T-cell (primary cell): ENCODE measurements at regions of chrX and their contacts with region 1.

Region 1: DNA sequence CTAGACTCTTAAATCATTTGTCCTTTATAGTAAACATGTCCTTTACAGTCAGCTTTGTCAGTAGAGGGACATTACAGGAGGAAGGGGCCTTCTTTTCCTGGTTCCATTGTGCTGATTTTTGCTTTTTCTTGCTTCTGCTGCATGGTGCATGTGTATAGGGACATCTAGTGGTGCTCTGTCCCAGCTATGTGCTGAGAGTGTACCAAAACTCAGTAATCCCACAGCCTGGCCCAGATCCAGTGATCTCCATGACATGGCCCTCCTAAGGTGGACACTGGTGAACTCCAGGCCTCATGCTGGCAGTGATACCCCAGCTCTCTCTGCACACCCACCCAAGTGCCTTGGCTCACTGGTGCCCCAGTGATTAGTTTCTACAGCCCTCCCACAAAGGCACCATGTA is 45.2 kb downstream of the MAGEB17 start:
- DNase-seq: peak in 1 of 35 experiments; percentile 0
- ATAC-seq: no peak
- H3K4me3 ChIP-seq: no peak overlapping the region
- H3K4me3 Mint-ChIP-seq: no peak overlapping the region
- H3K27ac ChIP-seq: no peak overlapping the region
- H3K27ac Mint-ChIP-seq: no peak overlapping the region
- H3K4me1 ChIP-seq: no peaks in the 10 kb centered on the region
- H3K4me1 Mint-ChIP-seq: no peaks in the 10 kb centered on the region
- H3K27me3 ChIP-seq: no peaks in the 10 kb centered on the region
- H3K27me3 Mint-ChIP-seq: peaks cover 1 to 4% of the 10 kb centered on the region in 2 donors

Region 2: GRCh38 chrX:16186380-16187007 is 25.9 kb before region 1 on chrX:
- CTCF ChIA-PET with region 1: no interaction called
- POLR2A ChIA-PET with region 1: interaction called in 1 of 2 experiments, 11 read pairs
- DNase-seq: no peak
- ATAC-seq: no peak
- H3K4me3 ChIP-seq: no peak overlapping the region
- H3K4me3 Mint-ChIP-seq: no peak overlapping the region
- H3K27ac ChIP-seq: no peak overlapping the region
- H3K27ac Mint-ChIP-seq: no peak overlapping the region
- H3K4me1 ChIP-seq: no peaks in the 10 kb centered on the region
- H3K4me1 Mint-ChIP-seq: no peaks in the 10 kb centered on the region
- H3K27me3 ChIP-seq: no peaks in the 10 kb centered on the region
- H3K27me3 Mint-ChIP-seq: peaks cover 4 to 23% of the 10 kb centered on the region in 2 donors

Region 3: GRCh38 chrX:16223385-16223784 is 10.9 kb after region 1 on chrX:
- CTCF ChIA-PET with region 1: no interaction called
- POLR2A ChIA-PET with region 1: no interaction called
- DNase-seq: no peak
- ATAC-seq: no peak
- H3K4me3 ChIP-seq: no peak overlapping the region
- H3K4me3 Mint-ChIP-seq: no peak overlapping the region
- H3K27ac ChIP-seq: no peak overlapping the region
- H3K27ac Mint-ChIP-seq: no peak overlapping the region
- H3K4me1 ChIP-seq: no peaks in the 10 kb centered on the region
- H3K4me1 Mint-ChIP-seq: no peaks in the 10 kb centered on the region
- H3K27me3 ChIP-seq: no peaks in the 10 kb centered on the region
- H3K27me3 Mint-ChIP-seq: peaks cover 3 to 26% of the 10 kb centered on the region in 2 donors